ENCODE measurements at regions of chr2 and their contacts with region 1.

Region 1: GRCh38 chr2:197453161-197453914 is at the start of gene COQ10B:
- DNase-seq: peak; percentile 100
- total RNA-seq, gene COQ10B: 29.5 to 42.9 TPM

Region 2: DNA sequence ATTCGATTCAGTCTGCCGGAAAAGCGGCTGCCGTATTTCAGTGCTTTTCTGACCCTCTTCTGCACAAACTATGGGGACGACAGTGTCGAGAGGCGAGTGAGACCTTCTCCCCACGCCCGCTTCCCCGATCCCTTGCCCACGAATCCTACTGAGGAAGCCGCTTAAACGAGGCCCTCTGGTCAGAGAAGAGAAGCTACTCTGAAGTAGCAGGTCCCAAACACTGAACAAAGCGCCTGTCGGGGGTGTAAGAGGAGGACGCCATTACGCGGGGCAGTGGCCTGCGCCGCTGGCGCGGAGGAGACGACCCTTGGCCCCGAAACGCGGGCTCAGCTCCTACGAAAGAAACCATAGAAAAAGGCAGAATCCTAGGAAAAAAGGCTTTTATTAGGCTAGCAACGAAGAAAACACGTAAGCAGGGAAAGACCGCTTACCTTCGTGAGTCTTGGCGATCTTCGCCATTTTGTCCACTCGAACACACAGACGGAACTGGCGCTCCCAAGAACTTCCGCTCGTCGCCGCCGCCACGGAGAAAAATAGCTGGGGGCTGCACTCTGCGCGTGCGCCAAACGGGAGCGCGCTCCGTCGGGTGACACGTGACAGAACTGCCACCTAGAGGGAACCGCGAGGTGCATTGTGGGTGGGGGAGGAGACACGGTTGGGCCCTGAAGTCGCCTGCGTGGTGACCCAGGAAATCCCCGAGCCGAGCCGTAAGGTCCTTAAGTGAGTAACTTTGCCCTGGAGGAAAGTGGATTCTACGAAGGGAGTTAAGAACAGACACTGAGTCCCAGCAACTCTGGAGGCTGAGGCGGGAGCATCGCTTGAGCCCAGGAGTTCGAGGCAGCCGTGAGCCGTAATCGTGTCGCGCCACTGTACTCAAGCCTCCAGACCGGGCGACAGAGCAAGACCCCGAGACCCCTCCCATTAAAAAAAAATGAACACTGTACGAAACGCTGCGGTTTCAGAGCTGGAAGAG is 18.5 kb before region 1 on chr2 and contains the start of gene SF3B1:
- intact Hi-C with region 1: loop called in 1 of 2 experiments (anchors 2 kb)
- DNase-seq: peak; percentile 100
- total RNA-seq, gene SF3B1: 190 to 201 TPM

Region 3: GRCh38 chr2:197464175-197464574 is 10.8 kb after region 1 on chr2:
- intact Hi-C with region 1: no loop called
- DNase-seq: no peak

Region 4: GRCh38 chr2:198042189-198042588 is 588.9 kb after region 1 on chr2:
- intact Hi-C with region 1: loop called in 1 of 2 experiments (anchors 5 kb)
- DNase-seq: no peak

Measured in posterior vena cava (tissue), 2 donors.